A673 (cell line): ENCODE measurements at regions of chr10 and their contacts with region 1.

Region 1: DNA sequence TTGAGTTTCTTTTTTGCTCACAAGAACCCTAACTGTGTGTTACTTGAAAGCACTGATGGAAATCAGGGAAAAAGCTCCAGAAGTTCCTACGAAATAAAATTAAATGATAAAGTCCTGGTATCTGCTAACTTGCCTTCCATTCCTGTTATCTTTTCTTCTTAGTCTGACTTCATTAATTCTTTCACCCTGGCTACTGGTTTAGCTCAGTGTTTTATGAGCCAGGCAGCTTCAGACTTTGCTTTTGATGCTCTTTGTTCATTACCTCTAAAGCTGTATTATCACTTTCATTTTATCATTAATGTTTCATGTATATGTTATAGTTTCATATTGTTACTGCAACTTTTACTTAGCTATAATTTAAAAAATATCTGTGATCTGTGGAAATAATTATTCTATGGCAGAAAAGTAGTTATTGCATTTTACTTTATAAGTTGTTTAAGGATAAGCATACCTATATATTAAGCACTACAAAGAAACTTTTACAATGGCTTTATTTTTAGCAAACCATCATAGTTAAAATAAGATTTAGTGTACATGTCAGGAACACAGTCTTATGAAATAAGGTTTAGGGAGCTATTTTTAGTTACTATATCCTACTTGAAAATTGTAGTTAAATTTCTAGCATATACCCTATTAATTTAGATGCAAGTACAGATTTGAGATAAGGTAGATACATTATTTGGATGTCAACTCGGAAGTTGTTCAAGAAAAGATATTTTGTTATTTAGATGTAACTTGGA is 19.3 kb downstream of the PTEN start:
- DNase-seq: no peak
- H3K4me3 ChIP-seq: no peak overlapping the region
- H3K27ac ChIP-seq: no peak overlapping the region
- H3K4me1 ChIP-seq: peaks cover 10% of the 10 kb centered on the region
- H3K27me3 ChIP-seq: no peaks in the 10 kb centered on the region
- CTCF ChIP-seq: no peak

Region 2: DNA sequence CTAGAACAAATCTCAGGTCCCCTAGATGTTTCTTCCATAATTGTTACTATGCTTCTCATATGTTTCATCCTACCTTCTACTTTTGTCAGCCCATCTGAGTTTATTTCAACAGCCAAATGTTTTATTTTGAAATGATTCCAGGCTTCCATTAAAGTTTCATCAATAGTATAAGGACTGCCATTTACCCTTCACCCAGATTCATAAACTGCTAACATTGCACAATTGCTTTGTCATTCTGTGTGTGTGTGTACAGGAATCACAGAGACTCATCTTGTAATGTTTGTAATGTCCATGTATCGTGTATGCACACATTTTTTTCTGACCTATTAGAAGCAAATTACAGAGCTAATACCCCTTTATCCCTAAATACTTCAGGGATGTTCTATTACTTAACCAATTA is 950.9 kb before region 1 on chr10:
- CTCF ChIA-PET with region 1: no interaction called
- POLR2A ChIA-PET with region 1: no interaction called
- intact Hi-C with region 1: no loop called
- DNase-seq: no peak
- H3K4me3 ChIP-seq: no peak overlapping the region
- H3K27ac ChIP-seq: no peak overlapping the region
- H3K4me1 ChIP-seq: no peaks in the 10 kb centered on the region
- H3K27me3 ChIP-seq: no peaks in the 10 kb centered on the region
- CTCF ChIP-seq: no peak

Region 3: DNA sequence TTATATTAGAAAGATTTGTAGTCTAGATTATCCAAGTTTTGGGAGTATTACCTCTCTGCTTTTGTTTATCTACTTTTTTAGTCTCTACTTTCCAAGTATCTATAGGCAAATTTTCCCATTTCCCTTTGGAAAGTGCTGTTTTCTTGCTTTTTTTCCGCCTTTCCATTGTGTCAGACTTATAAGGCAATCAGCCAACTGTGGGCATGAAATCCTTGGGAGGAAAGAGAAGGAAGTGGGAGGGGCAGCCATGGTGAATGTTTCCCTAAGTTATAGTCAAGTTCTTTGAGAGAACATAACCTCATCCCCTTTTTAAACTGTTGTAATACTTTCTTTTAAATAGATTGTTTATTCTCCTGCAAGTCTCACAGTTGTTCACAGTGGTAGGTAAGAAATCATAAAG is 33.3 kb after region 1 on chr10:
- CTCF ChIA-PET with region 1: no interaction called
- POLR2A ChIA-PET with region 1: no interaction called
- intact Hi-C with region 1: loop called (anchors 5 kb)
- DNase-seq: peak; percentile 28
- H3K4me3 ChIP-seq: no peak overlapping the region
- H3K27ac ChIP-seq: peak overlapping the region; percentile 22
- H3K4me1 ChIP-seq: peaks cover 25% of the 10 kb centered on the region
- H3K27me3 ChIP-seq: no peaks in the 10 kb centered on the region
- CTCF ChIP-seq: no peak

Region 4: DNA sequence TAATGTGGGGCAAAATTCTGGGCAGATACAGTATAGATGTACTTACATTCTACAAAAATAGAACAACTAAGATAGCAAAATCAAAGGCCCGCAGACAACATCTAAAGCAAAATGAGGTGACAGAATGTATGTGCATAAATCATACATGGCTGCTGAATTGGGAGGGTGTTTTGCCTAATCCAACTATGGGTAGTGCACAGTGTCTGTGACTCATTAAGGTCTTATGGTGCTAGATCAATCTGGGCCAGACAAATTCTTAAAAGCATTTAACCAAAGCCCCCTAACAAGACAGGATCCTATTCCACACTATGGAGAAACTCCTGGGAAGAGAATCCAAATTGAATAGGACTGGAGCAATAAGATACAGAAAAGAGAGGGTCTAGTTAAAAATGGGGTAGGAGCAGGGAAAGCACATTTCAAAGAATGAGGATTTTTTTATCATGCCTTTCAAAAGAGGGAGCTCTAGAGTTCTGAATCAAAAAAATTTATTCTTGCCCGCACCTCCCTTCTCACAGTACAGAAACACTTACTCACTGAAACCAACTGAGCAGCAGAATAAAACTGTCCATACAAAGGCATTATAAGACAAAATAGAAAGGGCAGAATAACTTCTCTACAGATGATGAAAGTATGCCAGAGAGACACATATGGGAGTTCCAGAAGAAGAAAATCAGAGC is 519.1 kb after region 1 on chr10:
- CTCF ChIA-PET with region 1: no interaction called
- POLR2A ChIA-PET with region 1: no interaction called
- intact Hi-C with region 1: no loop called
- DNase-seq: peak; percentile 17
- H3K4me3 ChIP-seq: no peak overlapping the region
- H3K27ac ChIP-seq: no peak overlapping the region
- H3K4me1 ChIP-seq: no peaks in the 10 kb centered on the region
- H3K27me3 ChIP-seq: no peaks in the 10 kb centered on the region
- CTCF ChIP-seq: peak; percentile 28; the same call in 1 of the 2 replicates